ENCODE measurements at regions of chr6 and their contacts with region 1.

Region 1: GRCh38 chr6:153032255-153032882 is 29.9 kb upstream of the MTRF1L start:
- DNase-seq: no peak
- H3K4me3 ChIP-seq: no peak overlapping the region
- H3K27ac ChIP-seq: no peak overlapping the region
- H3K4me1 ChIP-seq: no peaks in the 10 kb centered on the region
- H3K27me3 ChIP-seq: no peaks in the 10 kb centered on the region
- CTCF ChIP-seq: peak; percentile 59

Region 2: DNA sequence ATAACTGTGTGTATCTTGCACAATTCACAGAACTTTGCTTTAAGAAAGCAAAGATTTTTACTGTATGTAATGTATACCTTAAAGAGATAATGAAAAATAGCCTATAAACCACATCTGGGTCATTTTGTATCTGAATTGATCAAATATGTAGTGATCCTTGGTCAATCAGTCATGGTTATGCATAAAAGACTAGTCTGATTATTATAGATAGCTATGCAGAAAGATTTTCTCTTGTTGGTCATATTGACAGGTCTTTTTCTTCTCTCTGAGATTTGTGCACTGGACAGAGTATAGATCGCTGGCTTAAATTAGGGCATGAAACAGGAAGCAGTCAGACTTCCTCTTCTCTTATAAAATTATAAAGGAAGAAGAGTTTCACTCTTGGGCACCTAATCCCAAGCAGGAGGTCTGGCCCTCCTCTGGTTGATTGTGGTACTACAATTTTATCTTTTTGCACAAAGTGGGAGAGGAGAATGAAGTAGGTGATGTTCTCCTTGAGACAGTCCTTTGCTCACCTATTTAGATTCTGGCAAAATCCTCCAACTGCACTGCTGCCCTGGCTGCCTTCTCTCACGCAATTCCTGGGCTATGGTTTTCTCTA is 479.6 kb after region 1 on chr6:
- intact Hi-C with region 1: loop called (anchors 5 kb)
- DNase-seq: no peak
- H3K4me3 ChIP-seq: no peak overlapping the region
- H3K27ac ChIP-seq: no peak overlapping the region
- H3K4me1 ChIP-seq: no peaks in the 10 kb centered on the region
- H3K27me3 ChIP-seq: no peaks in the 10 kb centered on the region
- CTCF ChIP-seq: peak; percentile 72

Measured in left ventricle myocardium inferior (tissue), 1 donor.